ENCODE measurements at regions of chr6 and their contacts with region 1.

Region 1: DNA sequence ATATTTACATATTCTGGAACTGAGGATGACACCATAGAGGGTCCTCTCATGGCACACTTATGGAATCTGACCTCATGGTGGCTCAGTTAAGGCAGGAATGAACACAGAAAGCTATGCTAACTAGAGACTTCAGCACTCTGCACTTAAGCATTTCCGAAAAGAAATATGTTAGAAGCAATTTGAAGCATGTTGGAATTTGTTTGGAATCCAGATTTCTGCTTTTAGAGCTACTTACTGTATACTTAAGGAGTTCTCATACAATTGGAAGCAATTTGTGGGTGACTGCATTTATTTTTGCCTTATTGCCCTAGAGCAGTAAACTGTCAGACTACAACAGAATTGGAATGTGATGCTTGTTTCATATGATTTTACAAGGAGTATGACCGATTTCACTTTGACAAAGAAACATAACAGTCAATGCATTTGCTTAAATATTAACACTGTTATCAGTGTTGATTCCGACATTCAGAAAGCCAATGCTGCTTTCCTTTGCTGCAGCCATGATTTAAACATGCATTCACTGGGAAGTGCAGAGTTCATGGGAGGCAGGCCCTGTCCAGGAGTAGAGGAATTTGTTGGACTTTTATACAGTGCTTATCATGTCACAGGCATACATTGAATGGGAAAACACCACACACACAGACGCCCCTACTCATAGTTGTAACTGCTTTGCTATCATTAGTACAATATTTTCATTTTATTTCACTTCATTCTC is 244.4 kb downstream of the SAMD5 start:
- DNase-seq: peak; percentile 9
- ATAC-seq: peak; percentile 94
- H3K4me3 ChIP-seq: no peak overlapping the region
- H3K27ac ChIP-seq: peak overlapping the region; percentile 60; the same call in 1 of the 2 replicates
- H3K4me1 ChIP-seq: no peaks in the 10 kb centered on the region
- H3K27me3 ChIP-seq: no peaks in the 10 kb centered on the region
- CTCF ChIP-seq: no peak
- POLR2A ChIP-seq: no peak
- RAD21 ChIP-seq: no peak

Region 2: GRCh38 chr6:147733686-147734085 is 19.2 kb before region 1 on chr6:
- CTCF ChIA-PET with region 1: no interaction called
- POLR2A ChIA-PET with region 1: no interaction called
- dilution Hi-C with region 1: no loop called
- in situ Hi-C with region 1: no loop called
- intact Hi-C with region 1: loop called (anchors 2 kb)
- DNase-seq: no peak
- ATAC-seq: no peak
- H3K4me3 ChIP-seq: no peak overlapping the region
- H3K27ac ChIP-seq: no peak overlapping the region
- H3K4me1 ChIP-seq: peaks cover 2% of the 10 kb centered on the region; the same call in 1 of the 2 replicates
- H3K27me3 ChIP-seq: no peaks in the 10 kb centered on the region; the same call in 1 of the 2 replicates
- CTCF ChIP-seq: no peak
- POLR2A ChIP-seq: no peak
- RAD21 ChIP-seq: no peak

Measured in IMR-90 (cell line).